Right ventricle myocardium inferior (tissue), 1 donor: ENCODE measurements at regions of chr11 and their contacts with region 1.

Region 1: DNA sequence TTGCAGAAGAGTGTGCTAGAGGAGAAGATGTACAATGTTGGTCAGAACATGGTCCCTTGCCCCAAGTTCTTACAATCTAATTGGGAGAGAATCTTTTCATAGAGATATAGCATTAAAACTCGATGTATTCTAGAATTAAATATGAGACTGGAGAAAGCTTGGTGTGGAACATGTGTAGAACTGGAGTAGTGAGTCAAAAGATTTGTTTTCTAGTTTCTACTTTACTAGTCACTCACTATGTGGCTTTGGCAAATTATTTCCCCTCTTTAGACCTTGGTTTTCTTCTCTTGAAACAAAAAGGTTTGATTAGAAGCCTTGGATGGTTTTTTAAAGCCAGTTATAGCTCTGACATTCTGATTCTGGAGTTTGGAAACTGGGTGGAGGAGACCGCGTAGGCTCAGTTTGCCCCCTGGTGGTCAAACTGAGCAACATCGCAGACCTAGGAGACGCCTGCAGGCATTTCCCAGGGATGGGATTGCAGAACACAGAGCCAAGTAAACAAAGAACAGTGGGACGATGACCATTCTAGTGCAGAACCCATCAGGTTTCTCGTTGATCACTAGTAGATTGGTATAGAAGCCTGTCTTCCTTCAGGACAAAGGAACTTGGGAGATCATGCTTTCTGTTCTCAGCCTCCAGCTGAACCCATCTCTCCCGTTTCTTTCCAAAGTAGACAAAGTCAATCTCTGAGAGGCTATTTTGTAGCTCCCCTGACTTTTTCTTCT is 8.5 kb upstream of the CHRDL2 start:
- DNase-seq: peak; percentile 74
- ATAC-seq: peak; percentile 93

Region 2: DNA sequence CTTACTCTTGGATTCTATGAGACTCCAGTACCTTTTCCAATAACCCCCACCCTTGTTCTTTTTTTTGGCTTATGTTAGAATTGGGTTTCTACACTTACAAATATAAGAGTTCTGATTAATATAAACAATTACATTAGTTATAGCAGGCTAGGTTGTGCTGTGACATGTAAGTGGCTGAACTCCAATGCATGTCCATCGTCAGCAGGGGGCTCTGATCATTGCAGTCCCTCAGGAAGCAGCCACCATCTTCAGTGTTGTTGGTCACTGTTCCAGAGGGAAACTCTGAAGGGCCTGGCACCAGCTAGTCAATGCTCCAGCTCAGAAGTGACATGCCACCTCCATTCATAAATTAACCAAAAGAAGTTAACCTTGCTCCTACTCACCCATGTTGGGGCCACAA is 251.8 kb before region 1 on chr11:
- intact Hi-C with region 1: no loop called
- DNase-seq: no peak
- ATAC-seq: no peak

Region 3: GRCh38 chr11:74577624-74578396 is 161.9 kb before region 1 on chr11:
- intact Hi-C with region 1: no loop called
- DNase-seq: no peak
- ATAC-seq: no peak

Region 4: DNA sequence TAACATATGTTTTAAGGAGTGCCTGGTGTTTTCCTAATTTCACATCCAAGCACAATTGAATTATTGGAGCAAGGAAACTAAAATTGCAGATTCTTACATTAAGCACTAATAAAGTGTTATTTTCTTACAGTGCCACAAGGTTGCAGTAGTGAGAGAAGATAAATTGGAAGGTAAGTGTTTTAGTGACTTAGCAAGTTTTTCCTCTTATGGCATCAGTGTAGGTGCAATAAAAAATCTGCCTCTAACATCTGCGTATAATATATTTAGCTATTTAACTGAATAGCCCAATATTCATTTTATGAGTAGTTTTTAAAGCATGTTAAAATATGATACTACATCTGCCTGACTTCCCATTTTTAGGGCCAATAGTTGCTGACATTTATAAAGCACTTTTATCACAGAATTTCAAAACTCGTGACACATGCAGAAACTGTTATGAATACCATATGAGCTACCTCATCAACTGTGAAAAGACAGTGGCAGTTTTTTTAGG is 128.3 kb before region 1 on chr11:
- intact Hi-C with region 1: loop called (anchors 5 kb)
- DNase-seq: no peak
- ATAC-seq: peak; percentile 31

Region 5: GRCh38 chr11:74696932-74697687 is 42.6 kb before region 1 on chr11:
- intact Hi-C with region 1: no loop called
- DNase-seq: peak; percentile 87
- ATAC-seq: peak; percentile 90